ENCODE measurements at regions of chr6 and their contacts with region 1.

Region 1: GRCh38 chr6:42563697-42564505 is at the start of gene UBR2:
- DNase-seq: peak; percentile 67 to 97 (median 93)
- ATAC-seq: peak; percentile 99
- H3K4me3 ChIP-seq: peak within 1 kb of the TSS; percentile 92
- H3K4me3 Mint-ChIP-seq: peak within 1 kb of the TSS; percentile 94 to 100 (median 96)
- H3K27ac ChIP-seq: peak within 1 kb of the TSS; percentile 95
- H3K27ac Mint-ChIP-seq: peak within 1 kb of the TSS; percentile 89 to 98 (median 93)
- H3K4me1 ChIP-seq: peaks cover 7 to 12% of the 10 kb centered on the region in 2 donors
- H3K4me1 Mint-ChIP-seq: peaks cover 17 to 43% (median 29%) of the 10 kb centered on the region in 7 donors
- H3K27me3 ChIP-seq: no peaks in the 10 kb centered on the region
- H3K27me3 Mint-ChIP-seq: peaks cover 0 to 7% (median 0%) of the 10 kb centered on the region in 5 donors
- total RNA-seq, gene UBR2: 35.6 to 45.5 (median 38.9) TPM

Region 2: GRCh38 chr6:41735427-41736356 is 828.2 kb before region 1 on chr6 and contains the start of gene TFEB:
- CTCF ChIA-PET with region 1: no interaction called
- POLR2A ChIA-PET with region 1: interaction called, 4 read pairs
- intact Hi-C with region 1: loop called in 1 of 2 experiments (anchors 1 kb)
- DNase-seq: peak; percentile 88 to 98 (median 93)
- ATAC-seq: peak; percentile 87
- H3K4me3 ChIP-seq: peak within 1 kb of the TSS; percentile 57
- H3K4me3 Mint-ChIP-seq: peak within 1 kb of the TSS; percentile 66 to 89 (median 80)
- H3K27ac ChIP-seq: peak within 1 kb of the TSS; percentile 80
- H3K27ac Mint-ChIP-seq: peak within 1 kb of the TSS in 8 of 9 donors; percentile 34 to 84 (median 62)
- H3K4me1 ChIP-seq: peaks cover 32 to 37% of the 10 kb centered on the region in 2 donors
- H3K4me1 Mint-ChIP-seq: peaks cover 13 to 32% (median 24%) of the 10 kb centered on the region in 7 donors
- H3K27me3 ChIP-seq: no peaks in the 10 kb centered on the region
- H3K27me3 Mint-ChIP-seq: no peaks in the 10 kb centered on the region
- total RNA-seq, gene TFEB: 7.4 to 39.9 (median 11.8) TPM

Region 3: GRCh38 chr6:41941280-41942066 is 622.4 kb before region 1 on chr6 and contains the start of gene CCND3:
- CTCF ChIA-PET with region 1: no interaction called
- POLR2A ChIA-PET with region 1: no interaction called
- intact Hi-C with region 1: loop called in 1 of 2 experiments (anchors 5 kb)
- DNase-seq: peak; percentile 63 to 93 (median 76)
- ATAC-seq: peak; percentile 86
- H3K4me3 ChIP-seq: peak within 1 kb of the TSS; percentile 68
- H3K4me3 Mint-ChIP-seq: peak within 1 kb of the TSS; percentile 91 to 100 (median 93)
- H3K27ac ChIP-seq: peak within 1 kb of the TSS; percentile 76
- H3K27ac Mint-ChIP-seq: peak within 1 kb of the TSS; percentile 90 to 96 (median 94)
- H3K4me1 ChIP-seq: peaks cover 51 to 68% of the 10 kb centered on the region in 2 donors
- H3K4me1 Mint-ChIP-seq: peaks cover 40 to 83% (median 69%) of the 10 kb centered on the region in 7 donors
- H3K27me3 ChIP-seq: no peaks in the 10 kb centered on the region
- H3K27me3 Mint-ChIP-seq: no peaks in the 10 kb centered on the region
- total RNA-seq, gene CCND3: 285 to 433 (median 313) TPM

Region 4: DNA sequence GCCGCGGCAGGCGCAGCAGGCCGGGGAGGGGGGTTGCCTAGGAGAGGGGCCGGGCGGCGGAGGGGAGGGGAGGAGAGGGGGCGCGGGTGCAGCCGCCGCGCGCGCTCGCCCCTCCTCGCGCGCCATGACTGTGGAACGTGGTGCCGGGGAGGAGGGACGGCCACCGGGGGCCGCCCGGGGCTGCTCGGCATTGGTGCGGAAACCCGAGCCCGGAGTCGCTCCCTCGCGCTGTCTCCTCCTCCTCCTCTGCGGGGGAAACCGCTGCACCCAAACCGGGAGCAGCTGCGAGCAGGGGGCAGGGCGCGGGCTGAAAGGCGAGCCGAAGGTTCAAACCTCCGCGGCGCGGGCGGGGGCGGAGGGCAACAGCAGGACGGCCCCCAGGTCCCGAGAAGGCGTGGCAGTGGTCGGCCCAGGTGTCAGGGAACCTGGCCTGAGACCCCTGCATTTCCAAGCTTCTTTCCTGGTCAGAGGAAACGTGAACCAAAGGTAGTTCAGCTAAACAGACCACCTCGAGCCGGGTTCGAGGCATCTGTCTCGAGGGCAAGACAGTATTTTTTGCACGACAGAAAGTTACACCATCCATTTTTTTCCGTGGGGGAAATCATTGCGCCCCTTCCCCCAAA is 110.8 kb before region 1 on chr6:
- CTCF ChIA-PET with region 1: no interaction called
- POLR2A ChIA-PET with region 1: interaction called, 9 read pairs
- intact Hi-C with region 1: loop called (anchors 1 to 5 kb)
- DNase-seq: peak; percentile 47 to 80 (median 78)
- ATAC-seq: peak; percentile 85
- H3K4me3 ChIP-seq: peak overlapping the region; percentile 80
- H3K4me3 Mint-ChIP-seq: peak overlapping the region; percentile 84 to 100 (median 96)
- H3K27ac ChIP-seq: peak overlapping the region; percentile 56
- H3K27ac Mint-ChIP-seq: peak overlapping the region in 8 of 9 donors; percentile 11 to 93 (median 72)
- H3K4me1 ChIP-seq: peaks cover 4 to 20% of the 10 kb centered on the region in 2 donors
- H3K4me1 Mint-ChIP-seq: peaks cover 25 to 41% (median 33%) of the 10 kb centered on the region in 7 donors
- H3K27me3 ChIP-seq: no peaks in the 10 kb centered on the region
- H3K27me3 Mint-ChIP-seq: peaks cover 0 to 11% (median 0%) of the 10 kb centered on the region in 5 donors

Region 5: GRCh38 chr6:42520786-42521607 is 42.9 kb before region 1 on chr6:
- CTCF ChIA-PET with region 1: no interaction called
- POLR2A ChIA-PET with region 1: no interaction called
- intact Hi-C with region 1: no loop called
- DNase-seq: peak in 1 of 9 donors; percentile 28
- ATAC-seq: peak; percentile 69
- H3K4me3 ChIP-seq: no peak overlapping the region
- H3K4me3 Mint-ChIP-seq: no peak overlapping the region
- H3K27ac ChIP-seq: no peak overlapping the region
- H3K27ac Mint-ChIP-seq: no peak overlapping the region
- H3K4me1 ChIP-seq: no peaks in the 10 kb centered on the region
- H3K4me1 Mint-ChIP-seq: peaks cover 0 to 7% (median 0%) of the 10 kb centered on the region in 7 donors
- H3K27me3 ChIP-seq: no peaks in the 10 kb centered on the region
- H3K27me3 Mint-ChIP-seq: no peaks in the 10 kb centered on the region

Region 6: GRCh38 chr6:42890311-42891198 is 326.7 kb after region 1 on chr6:
- CTCF ChIA-PET with region 1: no interaction called
- POLR2A ChIA-PET with region 1: no interaction called
- intact Hi-C with region 1: loop called (anchors 2 kb)
- DNase-seq: peak; percentile 70 to 90 (median 87)
- ATAC-seq: peak; percentile 99
- H3K4me3 ChIP-seq: peak overlapping the region; percentile 89
- H3K4me3 Mint-ChIP-seq: peak overlapping the region; percentile 94 to 100 (median 98)
- H3K27ac ChIP-seq: peak overlapping the region; percentile 87
- H3K27ac Mint-ChIP-seq: peak overlapping the region; percentile 89 to 99 (median 98)
- H3K4me1 ChIP-seq: peaks cover 0 to 8% of the 10 kb centered on the region in 2 donors
- H3K4me1 Mint-ChIP-seq: peaks cover 0 to 26% (median 14%) of the 10 kb centered on the region in 7 donors
- H3K27me3 ChIP-seq: no peaks in the 10 kb centered on the region
- H3K27me3 Mint-ChIP-seq: no peaks in the 10 kb centered on the region

Region 7: DNA sequence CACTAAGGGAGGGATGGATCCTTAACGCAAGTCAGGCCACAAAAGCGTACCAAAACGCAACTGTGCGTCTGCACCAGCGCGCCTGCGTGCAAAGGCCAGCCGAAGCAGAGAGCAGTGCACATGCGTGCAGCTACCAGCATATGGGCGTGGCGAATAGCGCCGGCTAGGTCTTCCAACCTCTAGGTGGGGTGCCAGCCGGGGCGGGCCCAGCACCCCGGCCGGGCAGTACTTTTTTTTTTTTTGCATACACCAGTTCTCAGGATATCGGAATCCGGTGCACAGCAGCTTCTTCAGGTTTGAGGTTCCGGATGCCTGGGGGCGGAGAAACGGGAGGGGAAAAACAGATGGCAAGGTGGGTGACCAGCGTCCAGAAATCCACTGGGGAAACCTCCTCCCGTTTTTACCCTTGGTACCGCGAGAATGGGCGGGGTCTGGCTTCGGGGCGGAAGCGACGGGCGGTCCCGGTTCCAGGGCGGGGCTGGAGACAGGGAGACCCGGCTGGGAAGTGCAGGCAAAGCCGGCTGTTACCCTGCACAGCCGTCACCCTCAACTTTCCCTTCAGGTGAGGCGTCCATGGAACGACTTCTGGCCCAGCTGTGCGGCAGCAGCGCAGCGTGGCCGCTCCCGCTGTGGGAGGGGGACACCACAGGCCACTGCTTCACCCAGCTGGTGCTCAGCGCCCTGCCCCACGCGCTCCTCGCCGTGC is 863.7 kb after region 1 on chr6 and contains the start of gene ABCC10:
- CTCF ChIA-PET with region 1: no interaction called
- POLR2A ChIA-PET with region 1: no interaction called
- intact Hi-C with region 1: loop called (anchors 1 to 5 kb)
- DNase-seq: peak; percentile 89 to 98 (median 95)
- ATAC-seq: peak; percentile 97
- H3K4me3 ChIP-seq: peak within 1 kb of the TSS; percentile 77
- H3K4me3 Mint-ChIP-seq: peak within 1 kb of the TSS; percentile 89 to 98 (median 94)
- H3K27ac ChIP-seq: peak within 1 kb of the TSS; percentile 95
- H3K27ac Mint-ChIP-seq: peak within 1 kb of the TSS; percentile 93 to 100 (median 98)
- H3K4me1 ChIP-seq: peaks cover 11 to 12% of the 10 kb centered on the region in 2 donors
- H3K4me1 Mint-ChIP-seq: peaks cover 15 to 36% (median 27%) of the 10 kb centered on the region in 7 donors
- H3K27me3 ChIP-seq: no peaks in the 10 kb centered on the region
- H3K27me3 Mint-ChIP-seq: peaks cover 0 to under 1% (median 0%) of the 10 kb centered on the region in 5 donors
- total RNA-seq, gene ABCC10: 56.2 to 74.6 (median 60.4) TPM

Region 8: DNA sequence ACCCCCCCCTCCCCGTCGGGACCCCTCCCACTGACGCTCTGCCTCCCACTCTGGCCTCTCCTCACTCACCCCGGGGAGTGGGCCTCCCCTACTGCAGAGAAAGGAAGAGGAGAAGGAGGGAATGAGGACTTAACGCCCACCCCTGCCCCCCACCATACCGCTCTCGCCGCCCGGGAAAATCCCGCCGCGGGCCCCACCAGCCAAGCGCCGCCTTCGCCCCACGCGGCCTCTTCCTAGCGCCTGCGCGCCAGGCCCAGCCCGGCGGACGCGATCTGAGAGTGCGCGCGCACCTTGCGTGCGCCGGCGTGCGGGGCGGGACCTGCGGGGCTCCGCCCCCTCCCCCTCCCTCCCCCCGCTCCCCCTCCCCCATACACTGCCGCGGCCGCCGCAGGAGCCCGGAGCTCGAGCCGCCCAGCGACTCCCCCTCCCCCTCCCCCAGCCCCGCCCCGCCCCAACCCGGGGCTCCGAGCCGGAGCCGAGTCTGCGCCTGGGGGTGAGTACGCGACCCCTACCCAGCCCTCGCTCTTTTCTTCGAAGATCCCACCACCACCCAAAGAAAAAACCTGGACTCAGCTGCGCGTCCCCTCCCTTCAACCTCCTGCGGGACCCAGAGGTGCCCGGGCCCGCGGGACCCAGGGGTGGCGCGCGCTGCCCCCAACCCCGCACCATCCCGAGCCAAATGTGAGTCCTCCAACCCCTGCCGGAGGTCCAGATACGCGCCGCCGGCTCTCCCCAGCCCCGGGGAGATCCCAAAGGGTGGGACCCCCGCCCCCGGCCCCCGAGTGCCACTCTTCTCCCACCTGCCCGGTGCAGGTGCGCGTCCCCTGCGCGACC is 1563.5 kb after region 1 on chr6 and contains the starts of genes MRPL14 and TMEM63B:
- CTCF ChIA-PET with region 1: no interaction called
- POLR2A ChIA-PET with region 1: no interaction called
- intact Hi-C with region 1: loop called in 1 of 2 experiments (anchors 2 kb)
- DNase-seq: peak; percentile 82 to 97 (median 90)
- ATAC-seq: peak; percentile 91
- H3K4me3 ChIP-seq: peak within 1 kb of the TSS; percentile 71
- H3K4me3 Mint-ChIP-seq: peak within 1 kb of the TSS; percentile 91 to 99 (median 96)
- H3K27ac ChIP-seq: peak within 1 kb of the TSS; percentile 97
- H3K27ac Mint-ChIP-seq: peak within 1 kb of the TSS; percentile 87 to 99 (median 96)
- H3K4me1 ChIP-seq: peaks cover 36 to 41% of the 10 kb centered on the region in 2 donors
- H3K4me1 Mint-ChIP-seq: peaks cover 46 to 75% (median 57%) of the 10 kb centered on the region in 7 donors
- H3K27me3 ChIP-seq: no peaks in the 10 kb centered on the region
- H3K27me3 Mint-ChIP-seq: no peaks in the 10 kb centered on the region
- total RNA-seq, gene MRPL14: 12.6 to 58.3 (median 15.8) TPM
- total RNA-seq, gene TMEM63B: 16.2 to 21.4 (median 18.1) TPM

Measured in naive thymus-derived CD4-positive, alpha-beta T cell (primary cell).